ENCODE measurements at regions of chr7 and their contacts with region 1.

Region 1: GRCh38 chr7:104857458-104858425 is 156.3 kb upstream of the KMT2E start:
- DNase-seq: no peak
- H3K4me3 ChIP-seq: no peak overlapping the region
- H3K27ac ChIP-seq: no peak overlapping the region
- H3K4me1 ChIP-seq: no peaks in the 10 kb centered on the region
- H3K27me3 ChIP-seq: peaks cover 69% of the 10 kb centered on the region
- CTCF ChIP-seq: no peak

Region 2: DNA sequence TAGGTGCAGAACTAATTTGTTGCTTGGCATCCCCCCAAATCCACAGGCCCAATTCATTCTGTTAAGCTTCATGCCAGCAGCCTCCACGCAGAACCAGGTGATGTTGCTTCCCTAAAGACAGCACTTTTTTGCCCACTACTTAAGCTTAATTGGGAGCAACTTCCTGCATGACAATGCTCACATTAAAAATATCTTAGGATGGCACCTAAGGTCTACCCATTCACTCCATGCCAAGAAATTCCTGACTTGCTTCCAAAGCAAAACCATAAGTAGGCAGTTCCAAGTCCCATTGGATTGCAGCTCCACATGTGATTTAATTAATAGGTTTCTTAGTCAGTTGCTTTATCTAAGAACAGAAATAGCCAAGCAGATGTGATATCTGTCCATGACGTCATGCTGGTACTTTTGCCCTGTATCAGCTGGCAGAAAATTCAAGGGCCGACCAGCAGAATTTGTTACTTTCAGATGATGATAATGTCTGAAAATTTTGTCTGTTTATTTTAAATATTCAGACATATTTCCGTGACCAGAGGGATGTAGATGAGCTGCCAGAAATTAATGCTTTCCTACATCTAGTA is 203.8 kb before region 1 on chr7:
- CTCF ChIA-PET with region 1: no interaction called
- POLR2A ChIA-PET with region 1: interaction called, 14 read pairs
- intact Hi-C with region 1: no loop called
- DNase-seq: no peak
- H3K4me3 ChIP-seq: no peak overlapping the region
- H3K27ac ChIP-seq: no peak overlapping the region
- H3K4me1 ChIP-seq: no peaks in the 10 kb centered on the region
- H3K27me3 ChIP-seq: peaks cover 2% of the 10 kb centered on the region; the same call in 1 of the 2 replicates
- CTCF ChIP-seq: no peak

Region 3: GRCh38 chr7:106139265-106140251 is 1281.8 kb after region 1 on chr7:
- CTCF ChIA-PET with region 1: no interaction called
- POLR2A ChIA-PET with region 1: no interaction called
- intact Hi-C with region 1: no loop called
- DNase-seq: no peak
- H3K4me3 ChIP-seq: no peak overlapping the region
- H3K27ac ChIP-seq: no peak overlapping the region
- H3K4me1 ChIP-seq: no peaks in the 10 kb centered on the region
- H3K27me3 ChIP-seq: no peaks in the 10 kb centered on the region
- CTCF ChIP-seq: no peak

Measured in PC-9 (cell line).